Posterior vena cava (tissue), 2 donors: ENCODE measurements at regions of chr3 and their contacts with region 1.

Region 1: DNA sequence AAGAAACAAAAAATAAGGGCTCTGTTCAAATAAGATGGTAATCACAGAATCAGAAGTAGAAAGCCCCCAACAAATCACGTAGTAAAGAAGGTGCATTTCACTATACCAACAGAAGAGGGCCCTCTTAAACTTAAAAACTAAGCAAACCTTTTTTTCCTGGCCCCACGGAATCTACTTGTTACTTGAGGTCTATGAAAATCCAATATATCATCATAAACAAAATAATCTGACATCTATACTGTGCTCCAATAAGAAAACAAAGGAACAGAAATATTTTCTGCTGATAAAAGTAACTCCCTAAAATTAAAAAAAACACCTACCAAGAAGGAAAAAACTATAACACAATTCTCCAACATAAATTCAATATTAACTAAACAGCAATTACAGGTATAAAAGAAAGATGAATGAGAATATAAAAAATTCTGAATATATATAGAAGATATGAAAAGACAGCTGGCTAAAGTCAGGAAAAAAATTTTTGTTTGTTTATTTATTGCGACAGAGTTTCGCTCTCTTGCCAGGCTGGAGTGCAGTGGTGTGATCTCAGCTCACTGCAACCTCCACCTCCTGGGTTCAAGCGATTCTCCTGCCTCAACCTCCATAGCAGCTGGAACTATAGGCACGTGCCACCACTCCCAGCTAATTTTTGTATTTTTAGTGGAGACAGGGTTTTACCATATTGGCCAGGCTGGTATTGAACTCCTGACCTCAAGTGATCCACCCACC is 81.8 kb downstream of the CLASP2 start:
- DNase-seq: no peak

Region 2: DNA sequence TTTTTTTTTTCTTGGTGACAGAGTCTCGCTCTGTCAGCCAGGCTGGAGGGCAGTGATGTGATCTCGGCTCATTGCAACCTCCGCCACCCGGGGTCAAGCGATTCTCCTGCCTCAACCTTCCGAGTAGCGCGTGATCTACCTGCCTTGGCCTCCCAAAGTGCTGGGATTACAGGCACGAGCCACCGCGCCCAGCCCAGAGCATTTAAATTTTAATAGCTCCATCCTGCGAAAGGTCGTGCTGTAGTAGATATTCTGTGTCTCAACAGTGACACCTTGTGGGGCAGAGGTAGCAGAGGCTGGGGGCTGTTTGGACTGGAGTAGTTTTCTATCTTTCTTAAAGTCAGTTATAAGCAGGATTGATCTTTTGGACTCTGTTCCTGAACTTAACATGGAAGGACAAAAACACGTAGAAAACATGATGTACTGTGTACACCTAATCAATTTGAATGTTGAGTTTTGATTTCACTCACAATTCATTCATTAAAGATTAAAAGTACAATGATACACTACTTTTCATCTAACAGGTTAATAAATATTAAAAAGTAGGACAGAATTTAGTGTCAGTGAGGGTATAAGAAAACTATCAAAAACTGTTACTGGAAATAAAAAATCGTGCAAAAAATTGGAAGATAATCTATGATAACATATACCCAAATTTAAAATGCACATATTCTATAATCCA is 151.2 kb after region 1 on chr3:
- intact Hi-C with region 1: loop called (anchors 5 kb)
- DNase-seq: peak; percentile 78